CD4-positive, alpha-beta memory T cell (primary cell): ENCODE measurements at regions of chr1 and their contacts with region 1.

Region 1: GRCh38 chr1:206982216-206982615 is 12.0 kb upstream of the FCAMR start:
- DNase-seq: peak; percentile 50 to 60 (median 53)
- H3K4me3 ChIP-seq: no peak overlapping the region
- H3K4me3 Mint-ChIP-seq: no peak overlapping the region
- H3K27ac ChIP-seq: no peak overlapping the region
- H3K27ac Mint-ChIP-seq: no peak overlapping the region
- H3K4me1 ChIP-seq: no peaks in the 10 kb centered on the region
- H3K4me1 Mint-ChIP-seq: no peaks in the 10 kb centered on the region
- H3K27me3 ChIP-seq: no peaks in the 10 kb centered on the region
- H3K27me3 Mint-ChIP-seq: peaks cover 12 to 17% of the 10 kb centered on the region in 2 donors

Region 2: GRCh38 chr1:206635080-206635977 is 346.9 kb before region 1 on chr1 and contains the start of gene DYRK3:
- CTCF ChIA-PET with region 1: interaction called, 51 read pairs
- POLR2A ChIA-PET with region 1: interaction called, 3 read pairs
- intact Hi-C with region 1: no loop called
- DNase-seq: peak; percentile 84 to 91 (median 87)
- H3K4me3 ChIP-seq: peak within 1 kb of the TSS; percentile 37 to 87
- H3K4me3 Mint-ChIP-seq: peak within 1 kb of the TSS; percentile 87 to 96 (median 90)
- H3K27ac ChIP-seq: peak within 1 kb of the TSS; percentile 48
- H3K27ac Mint-ChIP-seq: peak within 1 kb of the TSS; percentile 85 to 96 (median 95)
- H3K4me1 ChIP-seq: peaks cover 15% of the 10 kb centered on the region
- H3K4me1 Mint-ChIP-seq: peaks cover 8 to 26% (median 13%) of the 10 kb centered on the region in 4 donors
- H3K27me3 ChIP-seq: no peaks in the 10 kb centered on the region
- H3K27me3 Mint-ChIP-seq: peaks cover 4 to 7% of the 10 kb centered on the region in 2 donors
- total RNA-seq, gene DYRK3: 0.78 to 1.2 TPM

Region 3: GRCh38 chr1:206808615-206809014 is 173.6 kb before region 1 on chr1:
- CTCF ChIA-PET with region 1: interaction called, 37 read pairs
- POLR2A ChIA-PET with region 1: interaction called, 4 read pairs
- intact Hi-C with region 1: loop called (anchors 1 kb)
- DNase-seq: peak; percentile 61 to 68 (median 63)
- H3K4me3 ChIP-seq: no peak overlapping the region
- H3K4me3 Mint-ChIP-seq: no peak overlapping the region
- H3K27ac ChIP-seq: no peak overlapping the region
- H3K27ac Mint-ChIP-seq: peak overlapping the region in 6 of 7 donors; percentile 20 to 90 (median 83)
- H3K4me1 ChIP-seq: peaks cover 35% of the 10 kb centered on the region
- H3K4me1 Mint-ChIP-seq: peaks cover 24 to 56% (median 43%) of the 10 kb centered on the region in 4 donors
- H3K27me3 ChIP-seq: no peaks in the 10 kb centered on the region
- H3K27me3 Mint-ChIP-seq: no peaks in the 10 kb centered on the region

Region 4: DNA sequence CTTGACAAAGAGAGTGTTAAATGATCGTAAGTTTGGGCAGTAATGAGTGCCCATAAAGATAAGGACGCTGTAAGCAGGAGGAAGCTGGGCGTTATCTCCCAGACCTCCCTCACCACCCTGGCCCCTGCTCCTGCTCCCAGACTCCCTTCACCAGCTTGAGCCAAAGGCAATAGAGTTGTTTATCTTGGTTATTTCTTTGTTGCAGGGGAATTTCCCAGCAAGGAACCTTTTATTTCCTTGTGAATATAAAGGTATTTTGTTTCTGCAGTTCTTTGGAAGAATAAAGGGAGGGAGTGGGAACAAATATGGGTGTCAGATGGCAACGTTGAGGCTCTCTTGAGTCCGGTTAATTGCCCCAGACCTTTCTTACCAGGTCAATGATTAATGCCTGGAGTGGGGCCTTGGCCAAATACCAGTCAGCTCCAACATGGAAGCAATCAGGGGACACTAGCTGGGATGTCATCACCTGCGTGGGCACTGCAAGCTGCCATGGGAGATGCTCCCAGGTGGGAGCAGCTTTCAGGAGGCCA is 40.3 kb before region 1 on chr1:
- CTCF ChIA-PET with region 1: interaction called, 96 read pairs
- POLR2A ChIA-PET with region 1: no interaction called
- intact Hi-C with region 1: no loop called
- DNase-seq: no peak
- H3K4me3 ChIP-seq: no peak overlapping the region
- H3K4me3 Mint-ChIP-seq: no peak overlapping the region
- H3K27ac ChIP-seq: no peak overlapping the region
- H3K27ac Mint-ChIP-seq: no peak overlapping the region
- H3K4me1 ChIP-seq: no peaks in the 10 kb centered on the region
- H3K4me1 Mint-ChIP-seq: no peaks in the 10 kb centered on the region
- H3K27me3 ChIP-seq: no peaks in the 10 kb centered on the region
- H3K27me3 Mint-ChIP-seq: peaks cover 15% of the 10 kb centered on the region in 2 donors

Region 5: DNA sequence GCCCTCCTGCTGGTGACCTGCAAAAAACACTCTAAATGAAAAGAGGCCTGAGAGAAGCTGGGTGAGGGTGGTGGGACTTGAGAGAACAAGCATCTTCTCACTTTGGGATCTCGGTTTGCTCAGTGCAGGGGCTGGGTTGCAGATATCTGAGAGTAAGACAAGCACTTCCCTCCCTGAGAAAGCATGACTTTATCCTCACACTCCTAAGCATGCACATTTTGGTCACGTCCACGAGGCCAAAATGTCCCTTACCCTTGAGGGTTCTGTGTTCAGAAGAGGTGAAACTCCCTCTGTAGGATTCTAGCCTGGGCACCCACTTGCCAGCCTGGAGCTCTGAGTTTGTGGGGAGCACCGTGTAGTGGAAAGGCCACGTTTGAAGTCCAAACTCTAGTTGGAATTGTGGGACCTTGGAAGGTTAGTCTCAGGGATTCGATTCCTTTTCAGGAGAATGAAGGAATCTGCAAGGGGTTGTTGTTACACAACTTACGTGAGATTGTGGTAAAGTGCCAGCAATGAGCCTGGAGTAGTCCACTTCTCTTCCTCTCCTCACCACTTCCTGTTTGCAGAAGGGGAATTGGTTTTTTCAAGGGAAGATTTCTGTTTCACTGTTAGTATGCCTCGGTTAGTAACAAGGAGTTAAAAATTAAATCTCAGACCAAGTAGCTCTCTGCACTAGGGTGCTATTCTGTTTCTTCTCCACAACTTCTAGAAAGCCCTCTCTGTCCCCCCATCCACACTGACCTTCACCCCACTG is 14.9 kb before region 1 on chr1:
- CTCF ChIA-PET with region 1: interaction called, 36 read pairs
- POLR2A ChIA-PET with region 1: interaction called, 3 read pairs
- intact Hi-C with region 1: no loop called
- DNase-seq: no peak
- H3K4me3 ChIP-seq: no peak overlapping the region
- H3K4me3 Mint-ChIP-seq: peak overlapping the region in 7 of 8 donors; percentile 10 to 69 (median 51)
- H3K27ac ChIP-seq: no peak overlapping the region
- H3K27ac Mint-ChIP-seq: peak overlapping the region in 5 of 7 donors; percentile 38 to 84 (median 57)
- H3K4me1 ChIP-seq: peaks cover 19% of the 10 kb centered on the region
- H3K4me1 Mint-ChIP-seq: peaks cover 17 to 27% (median 20%) of the 10 kb centered on the region in 4 donors
- H3K27me3 ChIP-seq: no peaks in the 10 kb centered on the region
- H3K27me3 Mint-ChIP-seq: peaks cover under 1 to 6% of the 10 kb centered on the region in 2 donors